Right lobe of liver (tissue), 6 donors: ENCODE measurements at regions of chr2 and their contacts with region 1.

Region 1: DNA sequence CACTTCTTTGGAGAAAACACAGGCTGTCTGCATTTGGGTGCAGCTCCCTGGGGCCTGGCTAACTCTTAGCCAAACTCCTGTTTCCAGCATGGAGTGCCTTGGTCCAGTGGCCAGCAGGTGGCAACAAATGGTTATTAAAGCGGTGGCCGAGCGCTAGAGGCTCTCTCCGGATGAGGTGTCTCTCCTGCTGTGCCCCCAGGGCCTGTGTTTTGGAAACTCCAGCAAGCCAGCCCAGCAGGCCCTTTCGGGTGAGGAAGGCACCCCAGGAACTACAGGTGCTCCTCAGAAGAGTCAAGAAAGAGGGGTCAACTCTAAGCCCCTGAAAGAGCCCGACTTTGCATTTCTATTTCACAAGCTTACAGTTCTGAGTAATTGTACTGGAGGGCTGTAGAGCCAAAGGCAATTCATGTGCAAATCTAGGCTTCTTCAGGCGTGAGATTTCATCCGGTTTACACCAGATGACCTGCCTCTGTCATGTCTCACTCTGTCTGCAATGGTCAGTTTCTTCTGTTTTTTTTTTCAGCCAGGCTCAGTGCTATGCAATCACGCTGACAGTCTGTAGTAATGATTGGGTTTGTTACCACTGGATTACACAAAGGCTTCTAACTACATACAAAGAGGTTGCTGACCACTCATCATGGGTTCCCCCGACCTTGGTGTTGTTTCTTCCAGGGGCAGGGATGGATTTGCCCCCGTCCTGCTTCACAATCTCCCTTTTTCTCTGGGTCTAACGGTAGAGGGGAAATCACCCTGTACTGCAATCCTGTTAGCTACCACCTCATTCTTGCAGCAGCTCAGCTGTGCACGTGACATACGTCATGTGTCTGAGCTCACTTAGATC is 7.6 kb upstream of the CHRNA1 start:
- DNase-seq: peak; percentile 72 to 78 (median 77)
- ATAC-seq: peak; percentile 97 to 99 (median 98)
- H3K4me3 ChIP-seq: no peak overlapping the region
- H3K27ac ChIP-seq: no peak overlapping the region
- H3K4me1 ChIP-seq: no peaks in the 10 kb centered on the region
- H3K27me3 ChIP-seq: no peaks in the 10 kb centered on the region
- CTCF ChIP-seq: peak; percentile 74 to 86 (median 80)
- POLR2A ChIP-seq: no peak

Region 2: DNA sequence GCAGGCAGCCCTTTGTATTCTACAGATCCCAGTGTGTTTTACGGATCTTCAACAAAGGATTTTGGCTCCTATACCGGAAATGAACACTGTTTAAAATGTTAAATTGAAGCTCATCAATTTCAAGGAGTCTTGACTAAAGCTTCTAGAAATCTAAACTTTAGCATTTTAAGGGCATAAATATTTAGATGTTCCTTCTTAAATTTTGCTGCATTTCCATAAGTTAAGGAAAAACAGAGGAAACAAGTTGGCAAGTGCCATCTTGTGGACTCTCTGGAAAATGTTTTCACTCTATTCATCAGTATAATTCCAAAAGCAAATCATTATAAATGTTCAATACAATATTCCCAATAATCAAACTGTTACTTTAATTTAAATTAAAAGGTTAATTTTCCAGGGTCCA is 213.8 kb after region 1 on chr2:
- intact Hi-C with region 1: loop called (anchors 5 kb)
- DNase-seq: no peak
- ATAC-seq: peak in 1 of 4 donors; percentile 39
- H3K4me3 ChIP-seq: no peak overlapping the region
- H3K27ac ChIP-seq: no peak overlapping the region
- H3K4me1 ChIP-seq: no peaks in the 10 kb centered on the region
- H3K27me3 ChIP-seq: no peaks in the 10 kb centered on the region
- CTCF ChIP-seq: peak; percentile 50 to 57 (median 56)
- POLR2A ChIP-seq: no peak